Right ventricle myocardium inferior (tissue), 1 donor: ENCODE measurements at regions of chr7 and their contacts with region 1.

Region 1: DNA sequence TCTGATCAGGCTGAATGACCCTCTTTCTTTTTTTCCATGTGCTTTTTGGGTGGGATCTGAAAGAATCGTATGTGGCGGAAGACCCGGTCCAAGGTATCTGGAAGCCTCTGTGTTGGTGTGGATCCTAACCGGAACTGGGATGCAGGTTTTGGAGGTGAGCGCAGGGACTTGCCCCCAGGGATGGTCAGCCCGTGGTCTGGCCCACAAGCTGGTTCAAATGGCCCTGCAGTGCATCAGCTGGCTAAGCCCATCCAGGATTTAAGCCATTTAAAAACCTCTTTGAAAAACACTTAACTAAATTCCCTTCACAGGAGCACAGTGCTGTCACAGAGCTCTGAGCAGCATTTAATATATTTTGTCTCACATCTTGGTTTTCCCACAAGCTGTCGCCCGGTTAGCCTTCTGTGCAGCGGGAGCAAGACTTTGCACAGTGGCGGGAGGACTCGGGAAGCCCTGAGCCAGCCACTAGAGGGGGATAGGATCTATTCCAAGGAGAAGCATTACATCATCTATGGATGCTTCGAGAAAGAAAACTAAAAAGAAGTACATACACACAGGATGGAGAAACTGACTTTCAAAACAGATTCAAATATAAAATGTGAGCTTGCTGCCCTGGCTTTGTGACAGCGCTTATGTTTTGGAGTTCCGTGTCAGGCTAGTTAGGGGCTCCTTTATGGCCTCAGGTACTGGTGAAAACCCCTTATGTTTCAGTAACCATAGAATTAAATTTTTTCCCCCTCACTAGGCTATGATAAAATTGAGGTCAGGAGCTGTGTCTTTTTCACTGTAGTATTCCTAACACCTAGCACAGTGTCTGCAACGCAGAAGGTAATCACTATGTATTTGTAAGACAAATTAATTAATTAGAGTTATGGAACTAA is 11.3 kb downstream of the CPA2 start:
- DNase-seq: no peak
- ATAC-seq: peak; percentile 64

Region 2: GRCh38 chr7:130486114-130486958 is 208.3 kb after region 1 on chr7:
- intact Hi-C with region 1: loop called (anchors 5 kb)
- DNase-seq: peak; percentile 79
- ATAC-seq: peak; percentile 62